Activated naive CD4-positive, alpha-beta T cell treated with anti-CD3 and anti-CD28 coated beads for 36 hours (primary cell): ENCODE measurements at regions of chr3 and their contacts with region 1.

Region 1: DNA sequence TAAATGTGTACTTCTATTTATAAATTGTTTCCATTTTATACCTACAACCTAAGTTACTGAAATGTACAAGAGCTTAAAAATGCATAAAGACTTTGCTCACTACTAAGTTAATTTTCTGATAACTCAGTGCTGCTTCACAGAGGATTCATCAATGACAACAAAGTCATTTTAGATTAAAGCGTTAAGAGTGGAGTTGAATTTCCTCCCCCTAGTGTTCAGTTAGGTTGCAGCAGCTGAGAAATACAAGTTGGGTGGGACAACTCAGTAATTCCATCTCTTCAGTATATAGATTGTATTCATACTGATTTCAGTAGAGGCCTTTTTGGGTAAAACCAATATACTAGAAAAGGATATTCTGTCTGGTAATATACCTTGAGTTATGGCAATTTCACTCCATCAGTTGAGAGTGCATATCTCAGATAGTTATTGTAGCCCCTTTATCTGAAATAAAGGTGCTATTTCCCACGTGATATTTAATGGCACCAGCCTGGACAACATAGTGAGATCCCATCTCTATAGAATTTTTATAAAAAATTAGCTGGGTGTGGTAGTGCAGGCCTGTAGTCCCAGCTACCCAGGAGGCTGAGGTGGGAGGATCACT is 6.9 kb upstream of the RPL35A start:
- DNase-seq: peak; percentile 42
- H3K4me3 Mint-ChIP-seq: no peak overlapping the region
- H3K27ac Mint-ChIP-seq: no peak overlapping the region
- H3K4me1 Mint-ChIP-seq: no peaks in the 10 kb centered on the region
- H3K27me3 Mint-ChIP-seq: no peaks in the 10 kb centered on the region

Region 2: DNA sequence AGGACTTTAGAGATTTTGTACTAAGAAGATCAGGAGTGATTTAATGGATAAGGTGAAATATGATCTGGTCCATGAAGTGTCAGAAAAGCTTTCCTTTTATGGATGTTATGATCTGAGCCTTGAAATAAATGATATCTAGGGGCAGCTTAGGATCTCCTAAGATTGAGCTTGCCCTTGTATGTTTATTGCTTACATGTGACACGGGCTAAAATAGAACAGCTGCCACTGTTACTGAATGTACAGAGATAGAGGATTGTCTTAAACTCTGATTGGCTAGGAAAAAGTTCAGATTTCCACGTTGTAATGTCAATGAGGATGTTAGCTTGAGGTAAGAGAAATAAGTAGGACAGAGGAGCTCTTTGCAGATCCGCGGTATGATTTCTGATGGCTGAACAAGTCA is 184.5 kb before region 1 on chr3:
- CTCF ChIA-PET with region 1: no interaction called
- intact Hi-C with region 1: no loop called
- DNase-seq: no peak
- H3K4me3 Mint-ChIP-seq: no peak overlapping the region
- H3K27ac Mint-ChIP-seq: no peak overlapping the region
- H3K4me1 Mint-ChIP-seq: peaks cover 15% of the 10 kb centered on the region
- H3K27me3 Mint-ChIP-seq: no peaks in the 10 kb centered on the region

Region 3: GRCh38 chr3:197866035-197866434 is 77.0 kb before region 1 on chr3:
- CTCF ChIA-PET with region 1: no interaction called
- intact Hi-C with region 1: no loop called
- DNase-seq: no peak
- H3K4me3 Mint-ChIP-seq: no peak overlapping the region
- H3K27ac Mint-ChIP-seq: no peak overlapping the region
- H3K4me1 Mint-ChIP-seq: peaks cover 8% of the 10 kb centered on the region
- H3K27me3 Mint-ChIP-seq: no peaks in the 10 kb centered on the region

Region 4: GRCh38 chr3:197926418-197926817 is 16.6 kb before region 1 on chr3:
- CTCF ChIA-PET with region 1: interaction called, 8 read pairs
- intact Hi-C with region 1: loop called (anchors 1 kb)
- DNase-seq: peak; percentile 18
- H3K4me3 Mint-ChIP-seq: no peak overlapping the region
- H3K27ac Mint-ChIP-seq: no peak overlapping the region
- H3K4me1 Mint-ChIP-seq: peaks cover 4% of the 10 kb centered on the region
- H3K27me3 Mint-ChIP-seq: no peaks in the 10 kb centered on the region